ENCODE measurements at regions of chr4 and their contacts with region 1.

Region 1: GRCh38 chr4:84503495-84504437 is 4.7 kb upstream of the NKX6-1 start:
- DNase-seq: peak; percentile 33
- ATAC-seq: peak; percentile 15
- H3K4me3 Mint-ChIP-seq: peak overlapping the region; percentile 51
- H3K27ac Mint-ChIP-seq: no peak overlapping the region
- H3K4me1 Mint-ChIP-seq: peaks cover 46% of the 10 kb centered on the region
- H3K27me3 Mint-ChIP-seq: peaks cover 68% of the 10 kb centered on the region
- CTCF ChIP-seq: peak; percentile 22

Region 2: DNA sequence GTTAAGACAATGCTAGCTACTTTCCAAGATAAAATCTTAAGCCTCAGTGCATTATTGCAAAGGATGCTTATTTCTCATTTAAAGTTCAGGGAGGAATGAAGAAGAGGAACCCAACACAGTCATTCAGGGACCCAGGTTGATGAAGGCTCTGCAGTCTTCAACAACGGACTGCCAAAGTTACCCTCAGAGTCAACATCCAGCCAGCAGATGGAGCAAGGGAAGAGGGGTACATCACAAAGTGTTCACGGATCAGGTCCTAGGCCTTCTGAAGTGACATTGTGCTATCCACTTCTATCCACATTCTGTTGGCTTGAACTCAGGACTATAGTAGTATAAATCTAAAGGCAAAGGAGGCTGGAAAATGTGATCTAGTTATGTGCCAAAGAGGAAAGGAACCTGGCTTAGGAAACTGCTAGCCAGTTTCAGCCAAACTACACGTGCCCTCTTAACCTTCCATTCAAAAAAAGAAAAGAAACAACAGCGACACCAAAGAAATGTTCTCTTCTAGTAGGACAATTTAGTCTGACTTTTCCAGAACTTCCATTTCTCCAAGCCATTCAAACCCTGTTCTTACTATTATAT is 33.5 kb before region 1 on chr4:
- CTCF ChIA-PET with region 1: interaction called, 11 read pairs
- POLR2A ChIA-PET with region 1: no interaction called
- DNase-seq: peak; percentile 49
- ATAC-seq: peak; percentile 94
- H3K4me3 Mint-ChIP-seq: no peak overlapping the region
- H3K27ac Mint-ChIP-seq: no peak overlapping the region
- H3K4me1 Mint-ChIP-seq: peaks cover 16% of the 10 kb centered on the region
- H3K27me3 Mint-ChIP-seq: no peaks in the 10 kb centered on the region
- CTCF ChIP-seq: no peak

Measured in WTC11 (cell line).